ENCODE measurements at regions of chr1 and their contacts with region 1.

Region 1: DNA sequence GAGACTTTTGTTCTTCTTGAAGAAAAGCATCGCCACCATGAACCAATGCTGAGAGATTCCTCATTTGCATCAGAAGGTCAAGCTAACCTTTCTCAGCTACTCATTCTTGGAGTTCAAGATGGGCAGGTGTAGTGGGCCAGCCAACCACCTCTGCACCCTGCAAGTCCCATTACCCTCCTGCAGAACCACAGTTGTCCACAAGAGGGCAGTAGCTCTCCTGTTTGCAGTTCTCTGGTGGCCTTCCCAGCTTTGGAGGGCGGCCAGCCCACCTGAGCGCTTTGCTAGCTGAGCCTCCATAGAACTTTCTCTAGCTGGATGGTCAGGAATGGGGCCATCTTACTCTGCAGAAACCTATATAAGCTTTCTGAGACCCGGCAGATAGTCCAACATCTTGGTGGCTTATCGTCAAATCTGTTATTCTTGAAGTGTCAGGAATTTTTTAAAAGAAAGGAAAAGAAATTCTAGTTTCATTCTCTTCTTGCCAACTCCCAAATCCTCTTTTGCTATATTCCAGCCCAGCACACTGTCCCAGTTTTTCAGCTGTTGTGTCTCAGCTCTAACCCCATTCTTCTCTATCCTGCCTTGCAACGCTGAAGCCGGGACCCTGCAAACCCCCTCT is 11.0 kb upstream of the LMX1A start:
- DNase-seq: peak; percentile 78
- ATAC-seq: peak; percentile 64
- H3K4me3 ChIP-seq: no peak overlapping the region
- H3K4me3 Mint-ChIP-seq: no peak overlapping the region
- H3K27ac ChIP-seq: no peak overlapping the region
- H3K27ac Mint-ChIP-seq: no peak overlapping the region
- H3K4me1 ChIP-seq: peaks cover 0 to 7% of the 10 kb centered on the region in 2 donors
- H3K4me1 Mint-ChIP-seq: peaks cover 4% of the 10 kb centered on the region
- H3K27me3 ChIP-seq: peaks cover 0 to 38% (median 5%) of the 10 kb centered on the region in 4 experiments
- H3K27me3 Mint-ChIP-seq: peaks cover 72% of the 10 kb centered on the region
- CTCF ChIP-seq: peak; percentile 94

Region 2: GRCh38 chr1:165257969-165258459 is 109.5 kb before region 1 on chr1:
- CTCF ChIA-PET with region 1: no interaction called
- POLR2A ChIA-PET with region 1: no interaction called
- intact Hi-C with region 1: no loop called
- DNase-seq: peak; percentile 27
- ATAC-seq: no peak
- H3K4me3 ChIP-seq: no peak overlapping the region
- H3K4me3 Mint-ChIP-seq: no peak overlapping the region
- H3K27ac ChIP-seq: no peak overlapping the region
- H3K27ac Mint-ChIP-seq: no peak overlapping the region
- H3K4me1 ChIP-seq: no peaks in the 10 kb centered on the region
- H3K4me1 Mint-ChIP-seq: no peaks in the 10 kb centered on the region
- H3K27me3 ChIP-seq: peaks cover 0 to 3% (median 0%) of the 10 kb centered on the region in 4 experiments
- H3K27me3 Mint-ChIP-seq: peaks cover 36% of the 10 kb centered on the region
- CTCF ChIP-seq: peak; percentile 50

Region 3: GRCh38 chr1:165342587-165342986 is 24.9 kb before region 1 on chr1:
- CTCF ChIA-PET with region 1: interaction called, 13 read pairs
- POLR2A ChIA-PET with region 1: no interaction called
- intact Hi-C with region 1: no loop called
- DNase-seq: no peak
- ATAC-seq: no peak
- H3K4me3 ChIP-seq: no peak overlapping the region
- H3K4me3 Mint-ChIP-seq: no peak overlapping the region
- H3K27ac ChIP-seq: no peak overlapping the region
- H3K27ac Mint-ChIP-seq: no peak overlapping the region
- H3K4me1 ChIP-seq: no peaks in the 10 kb centered on the region
- H3K4me1 Mint-ChIP-seq: no peaks in the 10 kb centered on the region
- H3K27me3 ChIP-seq: peaks cover 0 to 14% (median 11%) of the 10 kb centered on the region in 4 experiments
- H3K27me3 Mint-ChIP-seq: peaks cover 37% of the 10 kb centered on the region
- CTCF ChIP-seq: no peak

Region 4: GRCh38 chr1:165355977-165356811 is 11.3 kb before region 1 on chr1 and contains the start of gene LMX1A:
- CTCF ChIA-PET with region 1: interaction called, 16 read pairs
- POLR2A ChIA-PET with region 1: no interaction called
- intact Hi-C with region 1: no loop called
- DNase-seq: no peak
- ATAC-seq: no peak
- H3K4me3 ChIP-seq: no peak within 1 kb of the TSS
- H3K4me3 Mint-ChIP-seq: no peak within 1 kb of the TSS
- H3K27ac ChIP-seq: no peak within 1 kb of the TSS
- H3K27ac Mint-ChIP-seq: no peak within 1 kb of the TSS
- H3K4me1 ChIP-seq: peaks cover 0 to 5% of the 10 kb centered on the region in 2 donors
- H3K4me1 Mint-ChIP-seq: peaks cover 5% of the 10 kb centered on the region
- H3K27me3 ChIP-seq: peaks cover 0 to 66% (median 40%) of the 10 kb centered on the region in 4 experiments
- H3K27me3 Mint-ChIP-seq: peaks cover 79% of the 10 kb centered on the region
- CTCF ChIP-seq: no peak
- total RNA-seq, gene LMX1A: not detected in 2 replicates

Region 5: GRCh38 chr1:165392634-165393571 is 25.4 kb after region 1 on chr1:
- CTCF ChIA-PET with region 1: interaction called, 23 read pairs
- POLR2A ChIA-PET with region 1: no interaction called
- intact Hi-C with region 1: no loop called
- DNase-seq: peak; percentile 94
- ATAC-seq: peak; percentile 99
- H3K4me3 ChIP-seq: peak overlapping the region in 1 of 5 experiments; percentile 24
- H3K4me3 Mint-ChIP-seq: peak overlapping the region; percentile 55
- H3K27ac ChIP-seq: no peak overlapping the region
- H3K27ac Mint-ChIP-seq: peak overlapping the region; percentile 91
- H3K4me1 ChIP-seq: peaks cover 20 to 33% of the 10 kb centered on the region in 2 donors
- H3K4me1 Mint-ChIP-seq: peaks cover 15% of the 10 kb centered on the region
- H3K27me3 ChIP-seq: peaks cover 0 to 84% (median 75%) of the 10 kb centered on the region in 4 experiments
- H3K27me3 Mint-ChIP-seq: peaks cover 82% of the 10 kb centered on the region
- CTCF ChIP-seq: peak; percentile 93

Region 6: GRCh38 chr1:165914136-165914798 is 546.8 kb after region 1 on chr1:
- CTCF ChIA-PET with region 1: interaction called, 5 read pairs
- POLR2A ChIA-PET with region 1: no interaction called
- intact Hi-C with region 1: loop called (anchors 1 kb)
- DNase-seq: peak; percentile 81
- ATAC-seq: peak; percentile 84
- H3K4me3 ChIP-seq: no peak overlapping the region
- H3K4me3 Mint-ChIP-seq: no peak overlapping the region
- H3K27ac ChIP-seq: no peak overlapping the region
- H3K27ac Mint-ChIP-seq: no peak overlapping the region
- H3K4me1 ChIP-seq: no peaks in the 10 kb centered on the region
- H3K4me1 Mint-ChIP-seq: peaks cover 2% of the 10 kb centered on the region
- H3K27me3 ChIP-seq: no peaks in the 10 kb centered on the region
- H3K27me3 Mint-ChIP-seq: no peaks in the 10 kb centered on the region
- CTCF ChIP-seq: peak; percentile 90

Region 7: GRCh38 chr1:165949335-165950130 is 582.0 kb after region 1 on chr1:
- CTCF ChIA-PET with region 1: no interaction called
- POLR2A ChIA-PET with region 1: no interaction called
- intact Hi-C with region 1: no loop called
- DNase-seq: no peak
- ATAC-seq: no peak
- H3K4me3 ChIP-seq: no peak overlapping the region
- H3K4me3 Mint-ChIP-seq: no peak overlapping the region
- H3K27ac ChIP-seq: no peak overlapping the region
- H3K27ac Mint-ChIP-seq: no peak overlapping the region
- H3K4me1 ChIP-seq: no peaks in the 10 kb centered on the region
- H3K4me1 Mint-ChIP-seq: no peaks in the 10 kb centered on the region
- H3K27me3 ChIP-seq: no peaks in the 10 kb centered on the region
- H3K27me3 Mint-ChIP-seq: peaks cover 4% of the 10 kb centered on the region
- CTCF ChIP-seq: no peak